MCF 10A (cell line): ENCODE measurements at regions of chr5 and their contacts with region 1.

Region 1: DNA sequence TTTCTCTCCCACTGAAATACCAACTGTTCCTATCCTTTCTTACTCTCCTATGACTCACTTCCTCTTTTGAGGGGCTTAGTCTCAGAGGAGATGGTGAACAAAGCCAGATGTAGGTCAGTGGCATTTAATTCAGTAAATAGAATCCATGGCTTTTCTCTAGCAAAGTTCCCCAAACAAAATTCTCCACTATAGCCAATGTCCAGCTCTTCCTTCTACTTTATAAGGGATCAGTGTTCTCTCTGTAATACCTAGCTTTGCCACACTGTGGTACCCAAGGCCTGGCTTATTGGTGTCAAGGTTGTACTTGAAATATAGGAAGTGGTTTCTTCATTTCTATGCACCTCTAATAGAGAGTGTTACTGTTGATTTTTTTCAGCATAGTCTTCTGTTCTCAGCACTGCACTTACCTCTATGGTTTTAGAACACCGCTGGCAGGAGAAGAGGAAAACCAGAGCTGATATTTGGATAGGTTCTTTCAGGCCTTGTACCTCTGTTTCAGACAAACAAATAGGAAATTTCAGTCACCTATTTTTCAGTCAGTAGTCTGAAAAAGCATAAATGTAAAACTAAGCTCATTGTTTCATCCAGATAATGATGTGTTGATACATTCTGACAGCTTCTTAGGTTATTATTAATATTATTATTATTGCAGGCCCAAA is 40.6 kb upstream of the ITGA2 start:
- DNase-seq: peak; percentile 88
- H3K4me3 Mint-ChIP-seq: no peak overlapping the region
- H3K27ac Mint-ChIP-seq: no peak overlapping the region
- H3K4me1 Mint-ChIP-seq: peaks cover 22% of the 10 kb centered on the region
- H3K27me3 Mint-ChIP-seq: no peaks in the 10 kb centered on the region
- CTCF ChIP-seq: peak; percentile 87

Region 2: DNA sequence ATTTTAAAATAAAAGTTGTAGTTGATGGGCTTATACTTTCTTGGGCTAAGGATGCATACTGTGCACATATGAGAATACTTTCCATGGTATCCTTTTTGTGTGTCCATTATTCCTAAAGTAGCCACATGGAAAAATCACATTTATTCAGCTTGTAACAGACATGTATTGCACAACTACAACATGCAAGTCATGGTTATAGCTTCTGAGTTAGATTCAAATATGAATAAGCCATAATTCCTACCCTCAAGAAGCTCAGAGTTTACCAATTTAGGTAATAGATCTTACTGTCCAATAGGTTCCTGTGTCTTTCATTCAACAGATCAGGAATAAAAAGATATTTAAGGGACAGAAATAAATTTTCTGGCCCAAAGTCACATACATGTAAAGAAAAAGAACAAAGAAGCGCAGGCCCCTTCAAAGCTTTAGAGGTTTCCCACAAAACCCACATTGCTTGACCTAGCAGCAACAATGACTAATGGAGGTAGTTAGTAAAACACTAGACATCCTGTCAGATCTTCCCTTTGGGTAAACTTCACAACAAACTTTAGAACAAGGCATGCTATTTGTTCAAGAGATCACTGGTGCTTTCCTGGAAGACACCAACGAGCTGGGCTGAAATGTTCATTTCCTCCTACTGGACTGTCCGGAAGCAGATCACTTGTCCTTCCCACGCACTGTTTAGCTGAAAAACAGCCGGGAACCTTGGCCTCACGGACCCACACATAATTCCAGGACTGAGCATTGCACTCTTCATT is 239.2 kb before region 1 on chr5:
- CTCF ChIA-PET with region 1: no interaction called
- POLR2A ChIA-PET with region 1: no interaction called
- intact Hi-C with region 1: no loop called
- DNase-seq: no peak
- H3K4me3 Mint-ChIP-seq: no peak overlapping the region
- H3K27ac Mint-ChIP-seq: no peak overlapping the region
- H3K4me1 Mint-ChIP-seq: no peaks in the 10 kb centered on the region
- H3K27me3 Mint-ChIP-seq: no peaks in the 10 kb centered on the region
- CTCF ChIP-seq: no peak

Region 3: GRCh38 chr5:52961274-52961681 is 12.7 kb after region 1 on chr5:
- CTCF ChIA-PET with region 1: interaction called, 47 read pairs
- POLR2A ChIA-PET with region 1: interaction called, 5 read pairs
- intact Hi-C with region 1: no loop called
- DNase-seq: peak; percentile 47
- H3K4me3 Mint-ChIP-seq: no peak overlapping the region
- H3K27ac Mint-ChIP-seq: no peak overlapping the region
- H3K4me1 Mint-ChIP-seq: peaks cover 15% of the 10 kb centered on the region
- H3K27me3 Mint-ChIP-seq: no peaks in the 10 kb centered on the region
- CTCF ChIP-seq: no peak

Region 4: DNA sequence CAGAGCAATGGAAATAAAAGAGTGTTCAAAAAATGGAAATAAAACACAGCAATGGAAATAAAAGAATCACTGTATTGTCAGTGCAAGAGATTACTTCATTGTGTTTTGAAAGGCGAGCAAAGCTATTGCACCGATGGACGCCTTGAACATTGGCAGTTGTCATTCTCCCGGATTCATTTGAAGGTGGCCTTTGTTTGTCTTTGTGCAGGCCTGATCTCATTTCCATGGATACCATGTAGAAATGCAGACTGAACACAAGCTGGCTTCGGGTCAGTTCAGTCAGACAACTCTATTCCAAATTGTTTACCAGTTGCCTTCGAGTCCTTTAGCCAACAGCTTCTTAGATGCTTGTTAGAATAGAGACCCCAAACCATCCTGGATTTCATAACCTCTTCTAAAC is 48.9 kb after region 1 on chr5:
- CTCF ChIA-PET with region 1: interaction called, 127 read pairs
- POLR2A ChIA-PET with region 1: interaction called, 7 read pairs
- intact Hi-C with region 1: no loop called
- DNase-seq: no peak
- H3K4me3 Mint-ChIP-seq: no peak overlapping the region
- H3K27ac Mint-ChIP-seq: no peak overlapping the region
- H3K4me1 Mint-ChIP-seq: peaks cover 11% of the 10 kb centered on the region
- H3K27me3 Mint-ChIP-seq: no peaks in the 10 kb centered on the region
- CTCF ChIP-seq: no peak

Region 5: GRCh38 chr5:53041071-53041692 is 92.6 kb after region 1 on chr5:
- CTCF ChIA-PET with region 1: interaction called, 23 read pairs
- POLR2A ChIA-PET with region 1: interaction called, 6 read pairs
- intact Hi-C with region 1: no loop called
- DNase-seq: no peak
- H3K4me3 Mint-ChIP-seq: no peak overlapping the region
- H3K27ac Mint-ChIP-seq: no peak overlapping the region
- H3K4me1 Mint-ChIP-seq: peaks cover 32% of the 10 kb centered on the region
- H3K27me3 Mint-ChIP-seq: no peaks in the 10 kb centered on the region
- CTCF ChIP-seq: no peak

Region 6: DNA sequence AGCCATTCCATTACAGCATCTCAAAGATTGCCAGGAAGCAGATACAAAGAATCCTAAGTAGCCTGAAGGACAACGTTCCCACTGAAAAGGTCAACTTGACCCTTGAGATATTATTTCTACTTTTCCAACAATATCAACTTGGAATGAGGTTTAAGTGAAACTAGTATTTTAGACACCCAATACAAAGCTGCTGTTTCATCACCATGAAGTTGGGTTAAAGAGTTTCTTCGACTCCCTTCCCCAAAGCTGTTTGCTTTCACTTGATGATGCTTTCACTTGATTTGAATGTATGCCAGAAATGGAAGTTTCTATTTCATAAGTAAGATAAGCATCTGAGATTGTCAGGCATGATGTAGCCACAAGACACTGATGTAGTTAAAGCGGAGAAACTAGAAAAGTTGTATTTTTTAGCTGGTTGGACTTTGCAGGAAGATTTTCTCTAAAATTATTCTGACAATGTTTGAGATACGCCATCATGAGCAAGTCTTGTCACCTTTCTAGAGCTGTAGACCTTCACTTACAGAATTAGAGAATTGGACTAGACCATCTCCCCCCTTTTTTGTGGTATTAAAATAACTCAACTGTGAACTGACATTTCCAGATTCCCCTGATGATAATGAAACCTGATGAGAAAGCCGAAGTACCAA is 140.9 kb after region 1 on chr5:
- CTCF ChIA-PET with region 1: interaction called, 248 read pairs
- POLR2A ChIA-PET with region 1: interaction called, 19 read pairs
- intact Hi-C with region 1: no loop called
- DNase-seq: no peak
- H3K4me3 Mint-ChIP-seq: no peak overlapping the region
- H3K27ac Mint-ChIP-seq: no peak overlapping the region
- H3K4me1 Mint-ChIP-seq: peaks cover 7% of the 10 kb centered on the region
- H3K27me3 Mint-ChIP-seq: no peaks in the 10 kb centered on the region
- CTCF ChIP-seq: no peak

Region 7: GRCh38 chr5:53114988-53115387 is 166.4 kb after region 1 on chr5:
- CTCF ChIA-PET with region 1: interaction called, 12 read pairs
- POLR2A ChIA-PET with region 1: interaction called, 10 read pairs
- intact Hi-C with region 1: no loop called
- DNase-seq: peak; percentile 24
- H3K4me3 Mint-ChIP-seq: no peak overlapping the region
- H3K27ac Mint-ChIP-seq: no peak overlapping the region
- H3K4me1 Mint-ChIP-seq: peaks cover 6% of the 10 kb centered on the region
- H3K27me3 Mint-ChIP-seq: no peaks in the 10 kb centered on the region
- CTCF ChIP-seq: peak; percentile 32

Region 8: DNA sequence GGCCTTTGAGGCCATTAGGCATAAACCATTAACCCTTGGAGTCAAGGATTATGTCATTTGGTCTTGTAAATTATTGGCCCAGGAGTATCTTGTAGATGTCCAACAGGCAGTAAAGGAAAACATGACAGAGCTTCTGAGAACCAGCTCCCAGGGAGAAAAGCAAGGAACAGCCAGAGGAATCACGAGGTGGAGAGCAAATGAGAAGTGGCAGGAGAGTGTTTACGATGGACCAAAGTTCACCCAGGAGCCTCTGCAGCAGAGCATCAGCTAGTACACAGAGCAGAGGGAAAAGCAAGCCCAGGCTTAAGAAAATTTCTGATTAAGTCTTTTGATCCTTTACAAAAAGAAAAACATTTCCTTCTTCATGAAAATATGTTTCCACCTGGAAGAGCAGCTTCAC is 818.1 kb after region 1 on chr5:
- CTCF ChIA-PET with region 1: no interaction called
- POLR2A ChIA-PET with region 1: no interaction called
- intact Hi-C with region 1: no loop called
- DNase-seq: no peak
- H3K4me3 Mint-ChIP-seq: no peak overlapping the region
- H3K27ac Mint-ChIP-seq: no peak overlapping the region
- H3K4me1 Mint-ChIP-seq: no peaks in the 10 kb centered on the region
- H3K27me3 Mint-ChIP-seq: no peaks in the 10 kb centered on the region
- CTCF ChIP-seq: no peak